ENCODE measurements at regions of chr14 and their contacts with region 1.

Region 1: GRCh38 chr14:45891417-45892080 is 638.5 kb upstream of the MIS18BP1 start:
- DNase-seq: no peak
- ATAC-seq: no peak
- H3K4me3 ChIP-seq: no peak overlapping the region
- H3K27ac ChIP-seq: no peak overlapping the region
- H3K4me1 ChIP-seq: no peaks in the 10 kb centered on the region
- H3K27me3 ChIP-seq: no peaks in the 10 kb centered on the region
- CTCF ChIP-seq: no peak
- EP300 ChIP-seq: no peak
- POLR2A ChIP-seq: no peak
- RAD21 ChIP-seq: no peak

Region 2: GRCh38 chr14:45785240-45785639 is 106.3 kb before region 1 on chr14:
- CTCF ChIA-PET with region 1: no interaction called
- POLR2A ChIA-PET with region 1: no interaction called
- RAD21 ChIA-PET with region 1: no interaction called
- SMC1A ChIA-PET with region 1: no interaction called
- in situ Hi-C with region 1: no loop called
- intact Hi-C with region 1: no loop called
- DNase-seq: no peak
- ATAC-seq: no peak
- H3K4me3 ChIP-seq: no peak overlapping the region
- H3K27ac ChIP-seq: no peak overlapping the region
- H3K4me1 ChIP-seq: no peaks in the 10 kb centered on the region
- H3K27me3 ChIP-seq: no peaks in the 10 kb centered on the region
- CTCF ChIP-seq: no peak
- EP300 ChIP-seq: no peak
- POLR2A ChIP-seq: no peak
- RAD21 ChIP-seq: no peak

Region 3: GRCh38 chr14:45868377-45868776 is 23.2 kb before region 1 on chr14:
- CTCF ChIA-PET with region 1: interaction called, 3 read pairs
- POLR2A ChIA-PET with region 1: interaction called, 10 read pairs
- RAD21 ChIA-PET with region 1: interaction called, 18 read pairs
- SMC1A ChIA-PET with region 1: interaction called, 14 read pairs
- in situ Hi-C with region 1: no loop called
- intact Hi-C with region 1: no loop called
- DNase-seq: peak; percentile 94
- ATAC-seq: peak; percentile 80
- H3K4me3 ChIP-seq: peak overlapping the region; percentile 43; the same call in 1 of the 2 replicates
- H3K27ac ChIP-seq: peak overlapping the region; percentile 93
- H3K4me1 ChIP-seq: peaks cover 16% of the 10 kb centered on the region
- H3K27me3 ChIP-seq: no peaks in the 10 kb centered on the region
- CTCF ChIP-seq: no peak
- EP300 ChIP-seq: no peak
- POLR2A ChIP-seq: no peak
- RAD21 ChIP-seq: 0 out of 2 replicates have a peak, but pooled peaks have one; percentile 3

Region 4: DNA sequence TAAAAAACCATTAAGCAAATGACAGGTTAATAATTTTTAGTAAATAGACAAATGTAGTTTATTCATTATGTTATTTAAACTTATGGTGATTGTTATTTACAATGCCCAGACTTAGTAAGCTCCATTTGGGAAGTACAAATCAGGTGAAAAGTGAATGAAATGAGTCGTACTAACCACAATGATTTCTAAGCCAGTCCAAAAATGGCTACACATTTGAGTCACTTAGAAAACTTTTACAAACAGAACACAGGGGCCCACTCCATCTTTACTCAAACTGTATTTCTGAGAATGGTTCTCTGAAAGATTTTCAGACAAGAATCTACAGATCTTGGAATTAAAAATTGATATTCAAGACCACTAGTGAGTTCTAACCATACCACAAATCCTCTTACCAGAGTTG is 14.7 kb after region 1 on chr14:
- CTCF ChIA-PET with region 1: no interaction called
- POLR2A ChIA-PET with region 1: interaction called, 4 read pairs
- RAD21 ChIA-PET with region 1: interaction called, 4 read pairs
- SMC1A ChIA-PET with region 1: interaction called, 20 read pairs
- in situ Hi-C with region 1: no loop called
- intact Hi-C with region 1: no loop called
- DNase-seq: peak; percentile 23
- ATAC-seq: peak; percentile 75
- H3K4me3 ChIP-seq: no peak overlapping the region
- H3K27ac ChIP-seq: no peak overlapping the region
- H3K4me1 ChIP-seq: peaks cover 4% of the 10 kb centered on the region; the same call in 1 of the 2 replicates
- H3K27me3 ChIP-seq: no peaks in the 10 kb centered on the region
- CTCF ChIP-seq: no peak
- EP300 ChIP-seq: peak in 1 of 2 experiments; percentile 25; a peak in 1 of 4 replicates
- POLR2A ChIP-seq: no peak
- RAD21 ChIP-seq: no peak